ENCODE measurements at regions of chr1 and their contacts with region 1.

Region 1: GRCh38 chr1:231211005-231211857 is 29.8 kb upstream of the GNPAT start:
- DNase-seq: peak; percentile 96
- ATAC-seq: peak; percentile 97
- H3K4me3 Mint-ChIP-seq: peak overlapping the region; percentile 61
- H3K27ac Mint-ChIP-seq: peak overlapping the region; percentile 79
- H3K4me1 Mint-ChIP-seq: peaks cover 8% of the 10 kb centered on the region
- H3K27me3 Mint-ChIP-seq: no peaks in the 10 kb centered on the region

Region 2: GRCh38 chr1:230350208-230350921 is 860.9 kb before region 1 on chr1:
- CTCF ChIA-PET with region 1: no interaction called
- POLR2A ChIA-PET with region 1: no interaction called
- intact Hi-C with region 1: no loop called
- DNase-seq: no peak
- ATAC-seq: no peak
- H3K4me3 Mint-ChIP-seq: no peak overlapping the region
- H3K27ac Mint-ChIP-seq: no peak overlapping the region
- H3K4me1 Mint-ChIP-seq: no peaks in the 10 kb centered on the region
- H3K27me3 Mint-ChIP-seq: peaks cover 2% of the 10 kb centered on the region

Region 3: DNA sequence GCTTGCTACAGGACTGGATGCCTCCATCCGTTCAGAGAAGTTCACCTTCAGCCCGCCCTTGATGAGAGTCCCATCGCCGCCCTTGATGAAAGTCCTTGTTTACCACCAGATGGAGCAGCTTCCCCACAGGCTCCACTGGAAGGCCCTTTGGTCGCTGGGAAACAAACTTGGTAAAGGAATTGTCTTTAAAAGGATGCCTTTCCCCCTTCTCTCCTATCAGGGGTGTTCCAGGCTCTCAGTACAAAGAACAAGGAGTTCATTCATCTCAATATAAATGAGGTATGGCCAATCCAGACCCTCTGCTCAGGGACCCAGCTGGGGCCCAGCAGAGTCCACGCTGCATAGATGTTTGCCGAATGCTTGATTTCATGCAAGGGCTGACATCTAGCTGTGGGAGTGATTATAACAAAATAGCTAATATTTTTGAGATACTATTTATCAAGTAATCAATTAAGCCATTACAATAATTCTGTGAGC is 413.3 kb before region 1 on chr1:
- CTCF ChIA-PET with region 1: no interaction called
- POLR2A ChIA-PET with region 1: no interaction called
- intact Hi-C with region 1: loop called in 1 of 2 experiments (anchors 1 kb)
- DNase-seq: peak; percentile 31
- ATAC-seq: no peak
- H3K4me3 Mint-ChIP-seq: no peak overlapping the region
- H3K27ac Mint-ChIP-seq: no peak overlapping the region
- H3K4me1 Mint-ChIP-seq: no peaks in the 10 kb centered on the region
- H3K27me3 Mint-ChIP-seq: peaks cover 10% of the 10 kb centered on the region

Region 4: GRCh38 chr1:230867903-230868735 is 343.1 kb before region 1 on chr1 and contains the start of gene C1orf198:
- CTCF ChIA-PET with region 1: no interaction called
- POLR2A ChIA-PET with region 1: no interaction called
- intact Hi-C with region 1: loop called in 1 of 2 experiments (anchors 1 kb)
- DNase-seq: peak; percentile 86
- ATAC-seq: peak; percentile 90
- H3K4me3 Mint-ChIP-seq: peak within 1 kb of the TSS; percentile 80
- H3K27ac Mint-ChIP-seq: peak within 1 kb of the TSS; percentile 21
- H3K4me1 Mint-ChIP-seq: peaks cover 22% of the 10 kb centered on the region
- H3K27me3 Mint-ChIP-seq: peaks cover 14% of the 10 kb centered on the region
- total RNA-seq, gene C1orf198: 5.8 to 6.9 TPM

Region 5: GRCh38 chr1:230917284-230918135 is 293.7 kb before region 1 on chr1:
- CTCF ChIA-PET with region 1: interaction called, 8 read pairs
- POLR2A ChIA-PET with region 1: no interaction called
- intact Hi-C with region 1: loop called (anchors 1 kb)
- DNase-seq: peak; percentile 85
- ATAC-seq: peak; percentile 80
- H3K4me3 Mint-ChIP-seq: no peak overlapping the region
- H3K27ac Mint-ChIP-seq: no peak overlapping the region
- H3K4me1 Mint-ChIP-seq: peaks cover 7% of the 10 kb centered on the region
- H3K27me3 Mint-ChIP-seq: no peaks in the 10 kb centered on the region

Region 6: GRCh38 chr1:231240883-231241735 is 29.9 kb after region 1 on chr1 and contains the start of gene GNPAT:
- CTCF ChIA-PET with region 1: interaction called, 4 read pairs
- POLR2A ChIA-PET with region 1: interaction called, 5 read pairs
- intact Hi-C with region 1: loop called in 1 of 2 experiments (anchors 1 kb)
- DNase-seq: peak; percentile 94
- ATAC-seq: peak; percentile 98
- H3K4me3 Mint-ChIP-seq: peak within 1 kb of the TSS; percentile 98
- H3K27ac Mint-ChIP-seq: peak within 1 kb of the TSS; percentile 95
- H3K4me1 Mint-ChIP-seq: peaks cover 58% of the 10 kb centered on the region
- H3K27me3 Mint-ChIP-seq: no peaks in the 10 kb centered on the region
- total RNA-seq, gene GNPAT: 58.0 to 62.0 TPM